ENCODE measurements at regions of chr16 and their contacts with region 1.

Region 1: GRCh38 chr16:21158208-21159110 is at the start of gene LDAF1:
- DNase-seq: peak; percentile 90
- H3K4me3 ChIP-seq: peak within 1 kb of the TSS; percentile 80 to 84
- H3K27ac ChIP-seq: no peak within 1 kb of the TSS
- H3K4me1 ChIP-seq: peaks cover 6 to 11% of the 10 kb centered on the region in 2 experiments; a peak in 3 of 4 replicates
- H3K27me3 ChIP-seq: no peaks in the 10 kb centered on the region
- CTCF ChIP-seq: no peak
- EP300 ChIP-seq: no peak
- RAD21 ChIP-seq: no peak
- polyA plus RNA-seq, gene LDAF1: 10.0 and 12.8 TPM in 2 replicates

Region 2: DNA sequence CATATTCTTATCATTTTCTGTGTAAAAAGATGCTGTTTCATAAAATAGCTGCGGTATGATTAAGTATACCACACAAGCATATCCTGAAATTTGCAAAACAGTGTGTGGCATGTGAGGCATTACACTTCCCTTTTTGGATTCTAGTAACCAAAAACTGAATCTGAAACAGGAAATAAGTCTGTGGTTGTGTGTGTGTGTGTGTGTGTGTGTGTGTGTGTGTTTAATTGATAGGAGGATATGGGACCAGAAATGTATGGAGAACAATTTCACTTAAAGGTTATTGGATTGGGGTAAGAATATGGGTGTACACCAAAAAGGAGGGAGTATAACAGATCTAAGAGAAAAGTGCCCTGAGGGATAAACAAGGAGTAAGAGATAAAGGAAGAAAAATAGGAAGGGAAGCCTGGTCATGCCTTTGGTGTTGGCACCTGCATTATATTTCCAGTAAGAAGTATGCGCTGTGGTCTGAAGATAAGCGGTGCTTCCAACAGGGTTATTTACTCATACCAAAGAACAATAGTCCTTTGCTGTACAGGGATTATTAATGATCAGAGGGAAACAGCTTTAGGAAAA is 253.9 kb before region 1 on chr16:
- CTCF ChIA-PET with region 1: no interaction called
- POLR2A ChIA-PET with region 1: no interaction called
- DNase-seq: no peak
- H3K4me3 ChIP-seq: no peak overlapping the region
- H3K27ac ChIP-seq: peak overlapping the region; percentile 53 to 85
- H3K4me1 ChIP-seq: peaks cover 16 to 43% of the 10 kb centered on the region in 2 experiments
- H3K27me3 ChIP-seq: no peaks in the 10 kb centered on the region
- CTCF ChIP-seq: no peak
- EP300 ChIP-seq: no peak
- RAD21 ChIP-seq: no peak

Region 3: DNA sequence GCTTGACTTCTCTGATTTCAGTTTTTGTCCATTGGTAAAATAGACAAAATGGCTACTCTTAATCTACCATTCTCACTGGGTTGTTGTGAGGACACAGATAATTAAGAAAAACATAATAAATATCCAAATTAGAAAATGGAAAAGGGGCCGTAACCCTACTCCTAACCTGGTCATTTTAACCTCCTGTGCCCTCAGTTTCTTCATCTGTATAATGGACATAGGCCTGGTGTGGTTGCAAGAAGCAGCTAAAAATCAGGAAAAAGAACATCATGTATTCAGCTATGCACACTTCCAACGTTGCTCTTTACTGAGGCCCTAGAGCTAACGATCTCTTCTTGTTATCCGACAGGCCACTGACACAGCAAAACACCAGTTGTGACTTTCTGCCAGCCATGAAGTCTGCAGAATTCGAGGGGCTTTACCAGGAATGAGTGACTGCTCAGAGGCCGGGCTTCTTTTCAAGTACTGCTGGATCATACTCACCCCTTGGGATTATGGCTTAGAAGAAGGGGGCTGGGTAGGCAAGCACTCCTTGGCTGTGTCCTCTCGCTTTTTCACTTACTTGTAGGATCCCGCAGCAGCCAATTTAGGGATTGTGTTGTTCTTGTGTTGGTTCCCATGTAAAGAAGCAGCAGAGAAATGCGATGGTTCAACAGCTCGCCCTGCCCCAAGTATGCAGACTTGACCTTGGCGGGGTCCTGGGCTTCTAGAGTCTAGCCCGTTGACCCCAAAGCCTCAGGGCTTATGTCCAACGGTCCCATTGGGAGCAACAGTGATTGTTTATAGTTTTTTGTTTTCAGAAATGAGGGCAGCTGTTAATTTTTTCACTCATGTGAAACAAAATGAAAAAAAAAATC is 20.9 kb after region 1 on chr16:
- CTCF ChIA-PET with region 1: interaction called, 12 read pairs
- POLR2A ChIA-PET with region 1: no interaction called
- DNase-seq: no peak
- H3K4me3 ChIP-seq: no peak overlapping the region
- H3K27ac ChIP-seq: no peak overlapping the region
- H3K4me1 ChIP-seq: no peaks in the 10 kb centered on the region
- H3K27me3 ChIP-seq: no peaks in the 10 kb centered on the region
- CTCF ChIP-seq: no peak
- EP300 ChIP-seq: no peak
- RAD21 ChIP-seq: no peak

Region 4: GRCh38 chr16:21184834-21185233 is 26.4 kb after region 1 on chr16:
- CTCF ChIA-PET with region 1: interaction called, 22 read pairs
- POLR2A ChIA-PET with region 1: no interaction called
- DNase-seq: no peak
- H3K4me3 ChIP-seq: no peak overlapping the region
- H3K27ac ChIP-seq: no peak overlapping the region
- H3K4me1 ChIP-seq: no peaks in the 10 kb centered on the region; a peak in 1 of 4 replicates
- H3K27me3 ChIP-seq: no peaks in the 10 kb centered on the region
- CTCF ChIP-seq: no peak
- EP300 ChIP-seq: no peak
- RAD21 ChIP-seq: no peak

Region 5: GRCh38 chr16:21194771-21195301 is 36.4 kb after region 1 on chr16:
- CTCF ChIA-PET with region 1: interaction called, 22 read pairs
- POLR2A ChIA-PET with region 1: no interaction called
- DNase-seq: no peak
- H3K4me3 ChIP-seq: no peak overlapping the region
- H3K27ac ChIP-seq: no peak overlapping the region
- H3K4me1 ChIP-seq: no peaks in the 10 kb centered on the region; a peak in 1 of 4 replicates
- H3K27me3 ChIP-seq: no peaks in the 10 kb centered on the region; the same call in 1 of the 2 replicates
- CTCF ChIP-seq: no peak
- EP300 ChIP-seq: no peak
- RAD21 ChIP-seq: no peak

Region 6: GRCh38 chr16:21277927-21278706 is 119.7 kb after region 1 on chr16 and contains the start of gene CRYM:
- CTCF ChIA-PET with region 1: interaction called, 31 read pairs
- POLR2A ChIA-PET with region 1: interaction called, 3 read pairs
- DNase-seq: peak; percentile 93
- H3K4me3 ChIP-seq: peak within 1 kb of the TSS; percentile 57 to 60
- H3K27ac ChIP-seq: no peak within 1 kb of the TSS
- H3K4me1 ChIP-seq: peaks cover 0 to 3% of the 10 kb centered on the region in 2 experiments; a peak in 1 of 4 replicates
- H3K27me3 ChIP-seq: peaks cover 20% of the 10 kb centered on the region; the same call in 1 of the 2 replicates
- CTCF ChIP-seq: peak; percentile 78
- EP300 ChIP-seq: no peak
- RAD21 ChIP-seq: peak; percentile 56
- polyA plus RNA-seq, gene CRYM: 1.0 and 1.8 TPM in 2 replicates

Region 7: GRCh38 chr16:21300309-21301167 is 142.1 kb after region 1 on chr16:
- CTCF ChIA-PET with region 1: interaction called, 84 read pairs
- POLR2A ChIA-PET with region 1: interaction called, 3 read pairs
- DNase-seq: peak; percentile 86
- H3K4me3 ChIP-seq: peak overlapping the region; percentile 71 to 93
- H3K27ac ChIP-seq: peak overlapping the region; percentile 35 to 66; a peak in 3 of 4 replicates
- H3K4me1 ChIP-seq: peaks cover 0 to 4% of the 10 kb centered on the region in 2 experiments; a peak in 1 of 4 replicates
- H3K27me3 ChIP-seq: no peaks in the 10 kb centered on the region
- CTCF ChIP-seq: peak; percentile 98
- EP300 ChIP-seq: peak in 1 of 2 experiments; percentile 73; a peak in 3 of 4 replicates
- RAD21 ChIP-seq: peak; percentile 99

Region 8: DNA sequence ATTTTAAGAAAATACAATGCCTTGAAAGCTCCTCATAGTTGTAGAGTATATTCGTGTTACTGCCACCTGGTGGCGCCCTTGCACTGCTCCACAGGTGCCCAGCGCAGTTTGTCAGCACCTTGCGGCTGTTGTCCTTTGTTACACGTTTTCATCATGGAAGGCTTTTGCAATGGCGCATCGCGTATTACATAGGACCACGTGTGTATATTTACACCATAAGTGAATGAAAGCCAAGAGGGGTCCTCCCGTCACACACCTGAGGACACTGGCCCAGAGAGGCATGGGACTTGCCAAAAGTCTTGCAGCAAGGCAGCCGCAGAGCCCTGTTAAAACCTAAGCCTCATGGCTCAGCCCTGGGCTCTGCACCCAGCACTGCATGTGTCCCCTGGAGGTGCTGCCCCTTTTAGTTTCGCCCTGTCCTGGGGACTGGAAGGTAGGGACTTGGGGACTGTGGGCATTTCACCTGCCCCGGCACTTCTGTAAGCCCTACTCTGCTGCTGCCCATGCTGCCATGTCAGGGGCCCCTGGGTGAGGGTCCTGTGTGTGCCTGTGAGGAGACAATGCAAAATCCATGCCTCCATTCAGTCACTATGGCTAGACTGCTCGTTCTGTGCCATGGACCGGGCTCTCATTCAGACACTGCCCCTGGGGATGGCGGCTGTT is 1163.0 kb after region 1 on chr16:
- CTCF ChIA-PET with region 1: interaction called, 24 read pairs
- POLR2A ChIA-PET with region 1: no interaction called
- DNase-seq: peak; percentile 84
- H3K4me3 ChIP-seq: peak overlapping the region in 1 of 2 experiments; percentile 14; a peak in 1 of 4 replicates
- H3K27ac ChIP-seq: no peak overlapping the region; a peak in 1 of 4 replicates
- H3K4me1 ChIP-seq: peaks cover 0 to 3% of the 10 kb centered on the region in 2 experiments; a peak in 1 of 4 replicates
- H3K27me3 ChIP-seq: no peaks in the 10 kb centered on the region
- CTCF ChIP-seq: peak; percentile 98
- EP300 ChIP-seq: no peak
- RAD21 ChIP-seq: peak; percentile 94